ENCODE measurements at regions of chrX and their contacts with region 1.

Region 1: GRCh38 chrX:140766024-140766611 is 56.6 kb downstream of the LINC00632 start:
- DNase-seq: peak; percentile 43

Region 2: DNA sequence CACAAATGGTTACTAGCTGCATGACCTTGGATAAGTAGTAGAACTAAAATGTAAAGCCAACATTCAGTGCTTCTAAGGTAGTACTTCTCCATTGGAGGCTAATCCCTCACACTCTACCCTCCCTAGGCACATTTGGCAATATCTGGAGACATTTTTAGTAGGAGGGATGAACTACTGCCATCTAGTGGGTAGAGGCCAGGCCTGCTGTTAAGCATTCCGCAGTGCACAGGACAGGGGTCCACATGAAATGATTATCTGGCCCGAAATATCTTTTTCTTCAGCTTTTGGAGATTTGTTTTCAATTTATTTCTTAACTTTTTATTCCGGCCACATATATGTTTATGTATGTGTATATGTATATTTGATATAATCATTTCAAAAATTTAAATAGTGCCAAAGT is 512.2 kb after region 1 on chrX:
- CTCF ChIA-PET with region 1: interaction called, 11 read pairs
- POLR2A ChIA-PET with region 1: no interaction called
- DNase-seq: peak; percentile 24